ENCODE measurements at regions of chr2 and their contacts with region 1.

Region 1: GRCh38 chr2:44981136-44982108 is 27.8 kb downstream of the SIX2 start:
- DNase-seq: peak; percentile 31
- H3K4me3 Mint-ChIP-seq: no peak overlapping the region
- H3K27ac Mint-ChIP-seq: no peak overlapping the region
- H3K4me1 Mint-ChIP-seq: peaks cover 6% of the 10 kb centered on the region
- H3K27me3 Mint-ChIP-seq: peaks cover 26% of the 10 kb centered on the region

Region 2: GRCh38 chr2:44578421-44579135 is 402.8 kb before region 1 on chr2:
- intact Hi-C with region 1: no loop called
- DNase-seq: no peak
- H3K4me3 Mint-ChIP-seq: peak overlapping the region; percentile 24
- H3K27ac Mint-ChIP-seq: peak overlapping the region; percentile 76
- H3K4me1 Mint-ChIP-seq: peaks cover 29% of the 10 kb centered on the region
- H3K27me3 Mint-ChIP-seq: no peaks in the 10 kb centered on the region

Region 3: GRCh38 chr2:45014016-45014702 is 32.7 kb after region 1 on chr2:
- intact Hi-C with region 1: loop called (anchors 1 kb)
- DNase-seq: no peak
- H3K4me3 Mint-ChIP-seq: no peak overlapping the region
- H3K27ac Mint-ChIP-seq: no peak overlapping the region
- H3K4me1 Mint-ChIP-seq: no peaks in the 10 kb centered on the region
- H3K27me3 Mint-ChIP-seq: peaks cover 70% of the 10 kb centered on the region

Region 4: GRCh38 chr2:45578056-45578809 is 596.8 kb after region 1 on chr2:
- intact Hi-C with region 1: loop called (anchors 1 kb)
- DNase-seq: no peak
- H3K4me3 Mint-ChIP-seq: no peak overlapping the region
- H3K27ac Mint-ChIP-seq: no peak overlapping the region
- H3K4me1 Mint-ChIP-seq: peaks cover 11% of the 10 kb centered on the region
- H3K27me3 Mint-ChIP-seq: no peaks in the 10 kb centered on the region

Measured in activated T-helper 1 cell treated with anti-CD3 and anti-CD28 coated beads, Interleukin-12 subunit alpha, Interleukin-12 subunit beta, Interleukin-2, Interleukin-4 antibody, amounts not matched to agents 30 ng/mL and 10 ng/mL and 1 ng/mL, durations not matched to agents 14 hours and 24 hours and 36 hours (primary cell).